ENCODE measurements at regions of chr7 and their contacts with region 1.

Region 1: DNA sequence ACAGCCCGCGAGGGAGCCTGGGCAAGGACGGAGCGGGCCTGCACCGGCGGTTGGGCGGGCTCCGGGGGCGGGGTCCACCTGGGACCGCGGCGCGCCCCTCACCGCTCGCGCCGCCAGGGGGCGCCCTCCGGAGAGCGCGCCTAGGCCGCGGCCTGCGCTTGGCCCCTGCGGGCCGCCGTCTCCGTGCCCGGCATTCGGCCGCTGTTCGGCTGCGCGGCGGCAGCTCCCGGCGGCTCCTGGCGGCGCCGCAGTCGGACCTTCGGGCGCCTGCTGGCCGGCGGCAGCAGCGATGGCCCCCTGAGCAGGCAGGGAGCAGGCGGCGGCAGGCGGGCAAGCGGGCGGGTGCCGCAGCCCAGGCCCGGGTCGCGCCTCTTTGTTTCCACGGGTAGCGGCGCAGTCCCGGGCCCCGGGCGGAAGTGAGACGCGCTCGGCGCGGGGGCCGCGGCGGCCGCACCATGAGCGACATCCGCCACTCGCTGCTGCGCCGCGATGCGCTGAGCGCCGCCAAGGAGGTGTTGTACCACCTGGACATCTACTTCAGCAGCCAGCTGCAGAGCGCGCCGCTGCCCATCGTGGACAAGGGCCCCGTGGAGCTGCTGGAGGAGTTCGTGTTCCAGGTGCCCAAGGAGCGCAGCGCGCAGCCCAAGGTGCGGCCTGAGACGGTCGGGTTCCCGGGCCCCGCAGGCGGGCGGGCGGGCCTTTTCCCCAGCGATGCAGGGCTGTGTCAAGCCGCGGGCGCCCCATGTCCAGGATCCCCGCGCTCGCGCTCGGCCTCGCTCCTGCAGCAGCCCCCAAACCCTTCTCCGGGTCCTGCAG is at the start of gene INTS15:
- DNase-seq: peak; percentile 11 to 82
- H3K4me3 ChIP-seq: peak within 1 kb of the TSS; percentile 83 to 88
- H3K27ac ChIP-seq: peak within 1 kb of the TSS; percentile 64 to 86
- H3K4me1 ChIP-seq: peaks cover 7 to 11% of the 10 kb centered on the region in 2 donors
- H3K27me3 ChIP-seq: no peaks in the 10 kb centered on the region
- CTCF ChIP-seq: peak in 2 of 3 experiments; percentile 41 to 98
- total RNA-seq, gene INTS15: 15.2 TPM

Region 2: GRCh38 chr7:5838761-5839500 is 751.1 kb before region 1 on chr7:
- intact Hi-C with region 1: no loop called
- DNase-seq: no peak
- H3K4me3 ChIP-seq: no peak overlapping the region
- H3K27ac ChIP-seq: no peak overlapping the region
- H3K4me1 ChIP-seq: no peaks in the 10 kb centered on the region
- H3K27me3 ChIP-seq: no peaks in the 10 kb centered on the region
- CTCF ChIP-seq: no peak

Region 3: GRCh38 chr7:6495597-6496262 is 94.3 kb before region 1 on chr7:
- intact Hi-C with region 1: no loop called
- DNase-seq: no peak
- H3K4me3 ChIP-seq: no peak overlapping the region
- H3K27ac ChIP-seq: no peak overlapping the region
- H3K4me1 ChIP-seq: no peaks in the 10 kb centered on the region
- H3K27me3 ChIP-seq: no peaks in the 10 kb centered on the region
- CTCF ChIP-seq: no peak

Region 4: DNA sequence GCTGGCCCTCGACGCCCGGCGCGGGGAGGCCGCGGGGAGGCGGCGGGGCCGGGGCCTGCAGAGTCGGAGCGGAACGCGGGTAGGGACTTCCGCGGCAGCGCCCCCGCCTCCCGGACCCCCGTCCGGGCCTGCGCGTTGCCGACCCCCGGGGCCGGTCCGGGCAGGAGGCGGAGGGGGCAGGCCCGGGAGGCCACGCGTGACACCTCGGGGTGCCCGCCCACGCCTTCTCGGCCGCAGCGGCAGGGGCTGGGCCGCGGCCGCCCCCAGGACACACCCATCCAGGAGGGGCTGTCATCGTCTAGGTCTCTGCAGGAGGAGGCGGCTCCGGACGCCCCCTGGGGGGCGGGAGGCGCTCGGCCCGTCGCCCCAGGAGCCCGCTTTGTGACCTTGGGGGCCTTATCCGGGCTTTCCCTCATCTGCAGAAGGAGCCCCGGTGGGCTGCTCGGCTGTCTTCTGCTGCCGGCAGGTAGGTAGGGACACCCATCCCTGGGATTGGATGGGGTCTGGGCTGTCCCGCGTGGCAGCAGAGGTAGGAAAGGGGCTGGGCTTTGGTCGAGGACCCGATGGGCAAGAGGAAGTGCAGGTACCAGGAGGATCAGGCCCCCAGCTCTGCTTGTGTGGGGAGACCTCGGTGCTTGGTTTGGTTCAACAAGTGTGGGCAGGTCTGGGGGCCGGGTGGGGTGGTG is 47.6 kb after region 1 on chr7:
- intact Hi-C with region 1: loop called (anchors 2 kb)
- DNase-seq: peak in 1 of 2 donors; percentile 72
- H3K4me3 ChIP-seq: peak overlapping the region; percentile 97 to 99
- H3K27ac ChIP-seq: peak overlapping the region; percentile 50 to 71
- H3K4me1 ChIP-seq: peaks cover 4 to 12% of the 10 kb centered on the region in 2 donors
- H3K27me3 ChIP-seq: no peaks in the 10 kb centered on the region
- CTCF ChIP-seq: peak in 1 of 3 experiments; percentile 16

Region 5: GRCh38 chr7:6658618-6659341 is 68.7 kb after region 1 on chr7:
- intact Hi-C with region 1: no loop called
- DNase-seq: no peak
- H3K4me3 ChIP-seq: no peak overlapping the region
- H3K27ac ChIP-seq: no peak overlapping the region
- H3K4me1 ChIP-seq: no peaks in the 10 kb centered on the region
- H3K27me3 ChIP-seq: no peaks in the 10 kb centered on the region
- CTCF ChIP-seq: no peak

Region 6: GRCh38 chr7:6725003-6725402 is 135.0 kb after region 1 on chr7:
- intact Hi-C with region 1: no loop called
- DNase-seq: no peak
- H3K4me3 ChIP-seq: no peak overlapping the region
- H3K27ac ChIP-seq: no peak overlapping the region
- H3K4me1 ChIP-seq: peaks cover 0 to 4% of the 10 kb centered on the region in 2 donors
- H3K27me3 ChIP-seq: no peaks in the 10 kb centered on the region
- CTCF ChIP-seq: no peak